Dendritic cell treated with granulocyte-macrophage colony-stimulating factor and Interleukin-4, amounts not matched to agents 40 ng/mL and 50 ng/mL, for 4 days (primary cell): ENCODE measurements at regions of chr2 and their contacts with region 1.

Region 1: GRCh38 chr2:146879882-146880281 is 964.9 kb upstream of the ACVR2A start:
- H3K4me3 Mint-ChIP-seq: no peak overlapping the region
- H3K27ac Mint-ChIP-seq: no peak overlapping the region
- H3K4me1 Mint-ChIP-seq: no peaks in the 10 kb centered on the region
- H3K27me3 Mint-ChIP-seq: no peaks in the 10 kb centered on the region

Region 2: GRCh38 chr2:146917431-146918042 is 37.7 kb after region 1 on chr2:
- intact Hi-C with region 1: loop called (anchors 5 kb)
- H3K4me3 Mint-ChIP-seq: no peak overlapping the region
- H3K27ac Mint-ChIP-seq: no peak overlapping the region
- H3K4me1 Mint-ChIP-seq: no peaks in the 10 kb centered on the region
- H3K27me3 Mint-ChIP-seq: no peaks in the 10 kb centered on the region

Region 3: GRCh38 chr2:147364597-147364996 is 484.7 kb after region 1 on chr2:
- intact Hi-C with region 1: no loop called
- H3K4me3 Mint-ChIP-seq: no peak overlapping the region
- H3K27ac Mint-ChIP-seq: no peak overlapping the region
- H3K4me1 Mint-ChIP-seq: no peaks in the 10 kb centered on the region
- H3K27me3 Mint-ChIP-seq: no peaks in the 10 kb centered on the region